ENCODE measurements at regions of chr22 and their contacts with region 1.

Region 1: GRCh38 chr22:37581504-37581903 is 1.6 kb upstream of the LGALS2 start:
- DNase-seq: no peak
- ATAC-seq: no peak
- H3K4me3 ChIP-seq: no peak overlapping the region
- H3K27ac ChIP-seq: no peak overlapping the region
- H3K4me1 ChIP-seq: peaks cover 72% of the 10 kb centered on the region
- H3K27me3 ChIP-seq: peaks cover 0 to 1% of the 10 kb centered on the region in 2 experiments; a peak in 1 of 5 replicates
- CTCF ChIP-seq: no peak
- EP300 ChIP-seq: no peak
- POLR2A ChIP-seq: no peak
- RAD21 ChIP-seq: no peak

Region 2: DNA sequence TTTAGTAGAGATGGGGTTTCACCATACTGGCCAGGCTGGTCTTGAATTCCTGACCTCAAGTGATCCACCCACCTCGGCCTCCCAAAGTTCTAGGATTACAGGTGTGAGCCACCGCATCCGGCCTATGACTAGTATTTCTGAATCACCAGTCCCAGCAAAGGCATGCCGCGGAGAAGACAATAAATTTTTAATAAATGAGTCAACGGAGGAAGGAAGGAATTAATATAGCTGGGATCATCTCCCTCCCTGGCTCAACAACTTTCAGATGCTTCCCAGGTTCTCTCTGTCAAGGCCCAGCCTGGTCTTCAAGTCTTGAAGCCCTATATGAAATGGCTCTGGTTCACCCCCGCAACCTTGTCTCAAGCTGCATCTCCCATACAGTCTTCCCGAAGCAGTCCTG is 253.5 kb before region 1 on chr22:
- CTCF ChIA-PET with region 1: no interaction called
- POLR2A ChIA-PET with region 1: no interaction called
- in situ Hi-C with region 1: loop called (anchors 10 kb)
- intact Hi-C with region 1: no loop called
- DNase-seq: no peak
- ATAC-seq: no peak
- H3K4me3 ChIP-seq: no peak overlapping the region
- H3K27ac ChIP-seq: no peak overlapping the region
- H3K4me1 ChIP-seq: peaks cover 30% of the 10 kb centered on the region
- H3K27me3 ChIP-seq: peaks cover 1 to 3% of the 10 kb centered on the region in 2 experiments; a peak in 2 of 5 replicates
- CTCF ChIP-seq: no peak
- EP300 ChIP-seq: no peak
- POLR2A ChIP-seq: no peak
- RAD21 ChIP-seq: no peak

Region 3: GRCh38 chr22:37544955-37545699 is 36.4 kb before region 1 on chr22:
- CTCF ChIA-PET with region 1: no interaction called
- POLR2A ChIA-PET with region 1: interaction called, 15 read pairs
- in situ Hi-C with region 1: no loop called
- intact Hi-C with region 1: no loop called
- DNase-seq: peak; percentile 81
- ATAC-seq: peak; percentile 55
- H3K4me3 ChIP-seq: peak overlapping the region; percentile 32 to 70 (median 39); a peak in 5 of 6 replicates
- H3K27ac ChIP-seq: peak overlapping the region; percentile 90
- H3K4me1 ChIP-seq: peaks cover 89% of the 10 kb centered on the region
- H3K27me3 ChIP-seq: no peaks in the 10 kb centered on the region
- CTCF ChIP-seq: peak; percentile 95
- EP300 ChIP-seq: no peak
- POLR2A ChIP-seq: no peak
- RAD21 ChIP-seq: peak; percentile 83; the same call in 1 of the 2 replicates

Region 4: GRCh38 chr22:38201710-38202436 is 620.4 kb after region 1 on chr22 and contains the start of gene MAFF:
- CTCF ChIA-PET with region 1: no interaction called
- POLR2A ChIA-PET with region 1: no interaction called
- in situ Hi-C with region 1: no loop called
- intact Hi-C with region 1: no loop called
- DNase-seq: peak; percentile 92
- ATAC-seq: peak; percentile 82
- H3K4me3 ChIP-seq: peak within 1 kb of the TSS; percentile 78 to 88 (median 83)
- H3K27ac ChIP-seq: peak within 1 kb of the TSS; percentile 90
- H3K4me1 ChIP-seq: peaks cover 51% of the 10 kb centered on the region
- H3K27me3 ChIP-seq: no peaks in the 10 kb centered on the region
- CTCF ChIP-seq: no peak
- EP300 ChIP-seq: no peak
- POLR2A ChIP-seq: peak; percentile 68 to 80
- RAD21 ChIP-seq: 0 out of 2 replicates have a peak, but pooled peaks have one; percentile 30
- total RNA-seq, gene MAFF: 3.1 and 5.4 TPM in 2 replicates

Measured in HepG2 (cell line).